PC-9 (cell line): ENCODE measurements at regions of chr5 and their contacts with region 1.

Region 1: GRCh38 chr5:83145882-83146331 is 68.6 kb downstream of the XRCC4 start:
- DNase-seq: no peak
- H3K4me3 ChIP-seq: no peak overlapping the region
- H3K27ac ChIP-seq: no peak overlapping the region
- H3K4me1 ChIP-seq: no peaks in the 10 kb centered on the region
- H3K27me3 ChIP-seq: no peaks in the 10 kb centered on the region
- CTCF ChIP-seq: no peak

Region 2: GRCh38 chr5:82334856-82335255 is 811.1 kb before region 1 on chr5:
- CTCF ChIA-PET with region 1: interaction called, 15 read pairs
- POLR2A ChIA-PET with region 1: no interaction called
- intact Hi-C with region 1: no loop called
- DNase-seq: no peak
- H3K4me3 ChIP-seq: no peak overlapping the region
- H3K27ac ChIP-seq: no peak overlapping the region
- H3K4me1 ChIP-seq: no peaks in the 10 kb centered on the region
- H3K27me3 ChIP-seq: no peaks in the 10 kb centered on the region
- CTCF ChIP-seq: no peak